ENCODE measurements at regions of chr20 and their contacts with region 1.

Region 1: DNA sequence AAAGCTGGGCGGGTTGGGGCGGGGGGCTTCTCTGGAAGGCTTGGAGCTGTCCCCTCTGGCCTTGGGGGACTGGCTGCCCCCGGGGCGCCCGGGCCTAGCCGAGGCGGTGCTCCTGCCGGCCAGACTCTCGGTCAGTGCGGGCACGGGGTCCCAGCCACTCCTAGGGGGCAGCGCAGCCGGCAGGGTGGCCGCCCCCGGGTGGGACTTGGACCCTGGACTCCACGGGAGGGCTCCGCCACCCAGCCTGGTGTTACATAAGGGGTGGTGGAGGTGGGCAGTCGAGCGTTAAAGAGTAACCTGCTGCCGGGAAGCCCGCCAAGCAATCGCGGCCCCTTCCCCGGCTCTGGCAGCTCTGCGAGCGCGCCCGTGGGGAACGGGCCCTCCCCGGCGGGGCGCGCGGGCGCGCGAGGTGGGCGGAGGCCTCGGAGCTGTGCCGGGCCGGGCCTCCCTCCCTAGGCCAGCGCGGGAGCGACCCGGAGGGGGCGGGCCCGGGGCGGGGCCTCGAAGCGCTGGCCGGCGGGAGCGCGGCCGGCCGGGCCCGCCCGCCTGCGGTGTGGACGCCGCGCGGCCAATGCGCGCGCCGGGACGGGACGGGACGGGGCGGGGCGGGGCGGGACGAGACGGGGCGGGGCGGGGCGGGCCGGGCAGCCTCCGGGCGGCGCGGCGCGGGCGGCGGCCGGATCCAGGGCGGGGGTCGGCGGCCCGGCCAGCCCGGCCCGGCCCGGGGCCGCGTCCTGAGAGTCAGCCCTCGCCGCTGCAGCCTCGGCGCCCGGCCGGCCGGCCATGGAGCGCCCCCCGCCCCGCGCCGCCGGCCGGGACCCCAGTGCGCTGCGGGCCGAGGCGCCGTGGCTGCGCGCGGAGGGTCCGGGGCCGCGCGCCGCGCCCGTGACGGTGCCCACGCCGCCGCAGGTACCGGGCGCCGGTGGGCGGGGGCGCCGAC is at the start of gene SLC2A4RG:
- DNase-seq: peak; percentile 89
- ATAC-seq: peak; percentile 51
- total RNA-seq, gene SLC2A4RG: 73.0 TPM

Region 2: DNA sequence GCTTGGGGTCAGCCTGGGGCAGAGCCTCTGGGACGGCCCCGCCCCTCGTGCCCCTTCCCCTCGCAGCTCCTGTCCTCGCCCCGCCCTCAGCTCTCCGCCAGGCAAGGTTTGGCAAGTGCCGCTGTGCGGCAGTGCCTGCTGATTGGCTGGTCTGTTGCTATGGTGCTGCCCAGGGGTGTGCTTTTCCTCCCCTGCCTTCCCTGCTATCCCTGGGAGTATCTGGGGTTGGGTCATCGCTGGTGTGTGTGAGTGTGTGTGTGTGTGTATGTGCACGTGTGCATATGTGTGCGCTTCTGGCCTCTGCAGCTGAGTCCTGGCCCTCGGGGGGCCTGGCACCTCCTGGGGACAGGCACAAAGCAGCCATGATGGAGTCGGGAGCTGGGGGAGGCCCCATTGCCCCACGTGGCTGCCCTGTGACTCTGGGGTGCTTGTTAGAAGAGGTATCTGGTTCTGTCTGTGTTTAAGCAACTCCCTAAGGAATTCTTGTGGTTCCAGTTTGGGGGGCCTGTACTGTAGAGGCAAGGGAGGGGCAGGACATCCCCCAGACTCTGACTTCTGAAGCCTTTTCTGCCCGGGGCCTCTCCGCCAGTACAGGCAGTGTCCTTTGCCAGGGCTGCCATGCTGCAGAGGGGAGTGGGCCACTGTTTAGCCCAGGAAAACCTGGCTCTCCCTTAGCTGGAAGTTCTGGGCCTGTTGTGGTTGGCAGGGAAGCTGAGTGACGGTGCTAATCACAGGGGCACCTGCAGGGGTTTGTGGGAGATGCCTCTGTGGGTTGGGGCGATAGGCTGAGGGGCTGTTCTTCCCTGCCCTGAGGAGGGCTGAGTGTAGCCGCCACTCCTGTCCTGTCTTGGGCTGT is 74.3 kb before region 1 on chr20:
- intact Hi-C with region 1: loop called (anchors 10 kb)
- DNase-seq: no peak
- ATAC-seq: peak; percentile 70

Region 3: GRCh38 chr20:63707549-63708300 is 31.7 kb before region 1 on chr20 and contains the starts of genes ARFRP1 and ZGPAT:
- intact Hi-C with region 1: no loop called
- DNase-seq: peak; percentile 94
- ATAC-seq: peak; percentile 95
- total RNA-seq, gene ARFRP1: 49.1 TPM
- total RNA-seq, gene ZGPAT: 23.8 TPM

Region 4: GRCh38 chr20:64001607-64002011 is 262.2 kb after region 1 on chr20:
- intact Hi-C with region 1: no loop called
- DNase-seq: no peak
- ATAC-seq: no peak

Measured in sciatic nerve (tissue), 2 donors.